Posterior vena cava (tissue), 2 donors: ENCODE measurements at regions of chr1 and their contacts with region 1.

Region 1: GRCh38 chr1:112390775-112391602 is 5.0 kb upstream of the CTTNBP2NL start:
- DNase-seq: peak; percentile 95

Region 2: GRCh38 chr1:112466078-112466660 is 75.2 kb after region 1 on chr1:
- intact Hi-C with region 1: loop called (anchors 2 to 5 kb)
- DNase-seq: peak; percentile 99

Region 3: GRCh38 chr1:112619520-112620376 is 228.8 kb after region 1 on chr1 and contains the start of gene CAPZA1:
- intact Hi-C with region 1: loop called in 1 of 2 experiments (anchors 10 kb)
- DNase-seq: peak; percentile 98
- total RNA-seq, gene CAPZA1: 104 to 109 TPM

Region 4: GRCh38 chr1:112706908-112707663 is 316.1 kb after region 1 on chr1 and contains the start of gene RHOC:
- intact Hi-C with region 1: loop called (anchors 5 to 10 kb)
- DNase-seq: peak; percentile 95
- total RNA-seq, gene RHOC: 297 to 387 TPM